Activated T-helper 1 cell treated with anti-CD3 and anti-CD28 coated beads, Interleukin-12 subunit alpha, Interleukin-12 subunit beta, Interleukin-2, Interleukin-4 antibody, amounts not matched to agents 30 ng/mL and 10 ng/mL and 1 ng/mL, durations not matched to agents 14 hours and 24 hours and 36 hours (primary cell): ENCODE measurements at regions of chr6 and their contacts with region 1.

Region 1: DNA sequence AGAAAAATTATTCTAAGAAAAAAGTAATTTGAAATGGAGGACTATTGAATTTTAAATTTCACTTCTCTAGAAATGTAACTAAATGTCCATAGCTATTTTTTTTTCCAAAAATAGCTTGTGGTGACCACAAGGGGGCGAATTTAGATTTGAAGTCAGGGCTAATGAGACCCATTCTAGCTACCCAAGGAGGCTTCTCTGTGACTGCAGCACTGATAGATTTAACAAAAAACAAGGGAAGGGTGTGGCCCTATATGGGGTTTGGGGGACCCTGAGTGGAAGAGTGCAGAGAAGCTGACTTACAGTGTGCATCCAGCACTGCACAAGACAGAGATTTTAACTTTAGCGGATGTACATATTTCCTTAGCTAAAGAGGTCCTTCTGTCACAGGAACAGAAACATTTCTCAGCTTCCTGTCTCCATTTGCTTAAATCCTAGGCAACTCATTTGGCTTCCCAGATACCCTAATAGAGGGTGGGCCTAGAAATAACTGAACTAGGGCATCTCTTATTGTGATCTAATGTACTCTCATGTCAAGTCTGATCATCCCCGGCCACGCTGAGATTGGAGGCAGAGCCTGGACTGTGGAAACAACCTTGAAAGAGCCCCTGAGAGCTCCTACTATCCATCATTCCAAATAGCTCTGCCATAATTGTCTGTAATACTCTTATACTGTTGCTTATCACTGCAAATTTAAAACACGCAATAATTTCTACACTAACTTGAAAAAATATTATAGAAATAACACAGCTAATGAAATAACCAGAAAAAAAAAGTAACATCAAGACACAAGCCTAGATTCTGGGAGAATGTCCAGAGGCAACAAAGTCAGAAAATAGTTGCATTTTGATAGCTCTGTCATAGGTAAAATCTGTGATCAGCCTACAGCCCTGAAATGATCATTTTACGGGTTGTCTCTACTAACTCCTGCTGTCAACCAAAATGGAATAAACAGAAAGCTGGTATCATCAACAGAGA is 93.6 kb downstream of the SNAP91 start:
- DNase-seq: no peak
- H3K4me3 Mint-ChIP-seq: no peak overlapping the region
- H3K27ac Mint-ChIP-seq: no peak overlapping the region
- H3K4me1 Mint-ChIP-seq: no peaks in the 10 kb centered on the region
- H3K27me3 Mint-ChIP-seq: no peaks in the 10 kb centered on the region

Region 2: GRCh38 chr6:81938014-81938856 is 1677.1 kb before region 1 on chr6:
- intact Hi-C with region 1: no loop called
- DNase-seq: no peak
- H3K4me3 Mint-ChIP-seq: no peak overlapping the region
- H3K27ac Mint-ChIP-seq: no peak overlapping the region
- H3K4me1 Mint-ChIP-seq: no peaks in the 10 kb centered on the region
- H3K27me3 Mint-ChIP-seq: no peaks in the 10 kb centered on the region

Region 3: GRCh38 chr6:84220809-84221409 is 605.6 kb after region 1 on chr6:
- intact Hi-C with region 1: loop called (anchors 2 kb)
- DNase-seq: no peak
- H3K4me3 Mint-ChIP-seq: no peak overlapping the region
- H3K27ac Mint-ChIP-seq: no peak overlapping the region
- H3K4me1 Mint-ChIP-seq: no peaks in the 10 kb centered on the region
- H3K27me3 Mint-ChIP-seq: no peaks in the 10 kb centered on the region

Region 4: GRCh38 chr6:84791233-84791632 is 1175.9 kb after region 1 on chr6:
- intact Hi-C with region 1: no loop called
- DNase-seq: no peak
- H3K4me3 Mint-ChIP-seq: no peak overlapping the region
- H3K27ac Mint-ChIP-seq: no peak overlapping the region
- H3K4me1 Mint-ChIP-seq: no peaks in the 10 kb centered on the region
- H3K27me3 Mint-ChIP-seq: no peaks in the 10 kb centered on the region

Region 5: DNA sequence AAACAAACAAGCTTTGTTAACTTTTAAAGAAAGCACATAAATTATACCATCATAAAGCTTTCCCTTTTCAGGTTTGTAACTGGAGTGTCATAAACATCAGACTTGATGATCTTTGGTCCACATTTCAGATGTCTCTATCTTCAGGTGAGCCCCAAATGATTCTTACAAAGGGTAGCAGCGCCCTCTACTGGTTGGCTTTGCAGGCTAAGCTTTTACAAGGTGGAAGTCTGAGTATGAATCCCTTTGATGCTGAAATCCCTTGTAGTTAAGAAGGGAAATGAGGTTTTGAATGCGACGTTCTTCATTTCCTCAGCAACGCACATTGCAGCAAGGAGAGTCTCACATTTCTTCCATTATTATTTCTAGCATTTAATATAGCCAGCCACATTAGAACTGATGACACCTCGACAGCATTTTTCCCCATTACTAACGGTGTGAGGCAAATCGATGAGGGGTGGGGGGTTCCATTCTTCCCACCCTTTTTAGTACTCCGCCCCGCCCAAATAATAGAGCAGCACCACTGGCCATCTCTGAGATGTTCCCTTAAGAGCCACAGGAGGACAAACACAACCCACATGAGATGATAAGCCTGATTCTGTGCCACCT is 1708.2 kb after region 1 on chr6:
- intact Hi-C with region 1: loop called (anchors 10 kb)
- DNase-seq: peak; percentile 51
- H3K4me3 Mint-ChIP-seq: no peak overlapping the region
- H3K27ac Mint-ChIP-seq: no peak overlapping the region
- H3K4me1 Mint-ChIP-seq: no peaks in the 10 kb centered on the region
- H3K27me3 Mint-ChIP-seq: peaks cover 3% of the 10 kb centered on the region